Psoas muscle (tissue), 8 donors: ENCODE measurements at regions of chr11 and their contacts with region 1.

Region 1: DNA sequence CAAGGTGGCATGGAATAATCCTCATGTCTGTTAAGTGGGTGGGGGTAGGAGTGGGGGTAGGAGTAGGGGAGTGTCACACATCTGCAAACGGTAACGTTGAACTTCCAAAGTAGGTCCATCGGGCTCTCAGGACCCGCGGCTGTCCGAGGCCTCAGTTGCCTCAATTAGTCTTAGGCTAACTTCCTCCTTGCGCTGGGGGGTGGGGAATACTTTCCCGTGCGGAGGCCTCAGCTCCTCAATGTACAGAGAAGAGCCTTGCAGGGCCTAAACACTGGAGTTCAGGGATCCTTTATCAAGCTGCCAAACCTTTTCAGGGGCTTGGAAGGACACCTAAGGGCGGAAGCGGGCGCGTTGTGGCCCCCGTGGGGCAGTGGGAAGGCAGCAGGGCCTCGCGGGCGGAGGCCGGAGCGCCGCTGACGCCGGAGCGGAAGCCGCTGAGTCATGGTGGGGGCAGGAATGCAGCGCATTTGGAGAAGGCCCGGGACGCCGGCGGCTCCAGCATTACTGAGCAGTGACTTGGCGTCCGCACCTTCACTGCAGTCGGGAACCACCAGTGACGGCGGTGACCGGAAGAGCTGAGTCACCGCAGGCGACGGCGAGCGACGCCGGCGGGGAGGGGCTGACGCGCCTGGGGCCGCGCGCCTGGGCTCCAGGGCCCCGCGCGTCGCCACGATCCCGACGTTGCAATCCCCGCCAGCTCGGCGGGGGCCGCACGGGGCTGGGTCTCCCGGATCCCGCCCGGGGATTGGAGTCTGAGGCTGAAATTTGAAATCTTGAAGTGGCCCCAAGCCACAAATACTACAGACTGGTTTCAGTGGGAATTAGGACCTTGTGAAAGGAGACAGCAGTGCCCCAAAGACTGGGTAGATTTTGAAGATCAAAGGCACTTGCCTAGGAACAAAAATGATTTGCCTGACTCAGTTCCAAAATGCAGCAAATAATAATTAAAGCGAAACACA is 20.2 kb upstream of the IPO7 start:
- DNase-seq: peak; percentile 97 to 98
- ATAC-seq: peak; percentile 99 to 100 (median 99)
- H3K4me3 ChIP-seq: peak overlapping the region; percentile 67
- H3K27ac ChIP-seq: peak overlapping the region; percentile 100
- H3K4me1 ChIP-seq: peaks cover 3% of the 10 kb centered on the region
- H3K27me3 ChIP-seq: no peaks in the 10 kb centered on the region
- CTCF ChIP-seq: no peak

Region 2: GRCh38 chr11:9280655-9281301 is 83.5 kb before region 1 on chr11:
- intact Hi-C with region 1: no loop called
- DNase-seq: no peak
- ATAC-seq: no peak
- H3K4me3 ChIP-seq: no peak overlapping the region
- H3K27ac ChIP-seq: no peak overlapping the region
- H3K4me1 ChIP-seq: no peaks in the 10 kb centered on the region
- H3K27me3 ChIP-seq: no peaks in the 10 kb centered on the region
- CTCF ChIP-seq: no peak

Region 3: DNA sequence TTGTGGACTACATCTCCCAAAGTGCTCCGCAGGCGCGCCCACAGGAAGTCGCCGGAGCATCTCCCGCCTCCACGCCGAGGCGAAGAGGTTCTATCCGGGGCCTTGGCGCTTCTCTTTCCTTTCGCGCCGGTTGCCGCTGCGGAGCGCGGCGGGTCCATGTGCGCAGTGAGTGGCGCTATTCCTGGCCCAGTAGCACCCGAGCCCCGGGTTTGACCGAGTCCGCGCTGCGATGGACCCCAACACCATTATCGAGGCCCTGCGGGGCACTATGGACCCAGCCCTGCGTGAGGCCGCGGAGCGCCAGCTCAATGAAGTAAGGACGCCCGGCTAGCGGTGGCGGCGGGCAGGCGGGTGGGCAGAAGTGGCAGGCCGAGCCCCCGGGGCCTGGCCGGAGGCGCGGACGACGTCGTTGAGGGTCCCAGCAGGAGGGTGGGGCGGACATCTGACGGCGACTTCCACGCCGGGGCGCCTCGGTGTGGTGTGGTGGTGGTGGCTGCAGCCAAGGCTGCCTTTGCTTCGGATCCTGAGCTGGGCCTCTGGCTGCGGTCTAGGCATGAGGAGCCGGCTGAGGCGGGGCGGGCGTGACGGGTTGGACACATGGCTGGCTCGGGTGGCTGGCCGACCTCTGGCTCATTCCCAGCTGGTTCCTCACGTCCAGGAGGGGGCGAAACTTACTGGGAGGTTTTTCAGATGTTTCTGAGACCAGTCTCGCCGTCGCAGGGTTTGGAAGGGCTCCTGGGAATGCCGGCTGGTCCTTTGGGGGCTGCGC is 20.5 kb after region 1 on chr11 and contains the start of gene IPO7:
- intact Hi-C with region 1: loop called in 1 of 2 experiments (anchors 2 kb)
- DNase-seq: peak; percentile 92 to 95
- ATAC-seq: peak; percentile 95 to 97 (median 96)
- H3K4me3 ChIP-seq: peak within 1 kb of the TSS; percentile 96
- H3K27ac ChIP-seq: peak within 1 kb of the TSS; percentile 99
- H3K4me1 ChIP-seq: peaks cover 22% of the 10 kb centered on the region
- H3K27me3 ChIP-seq: no peaks in the 10 kb centered on the region
- CTCF ChIP-seq: peak; percentile 33
- total RNA-seq, gene IPO7: 222 to 355 (median 261) TPM